ENCODE measurements at regions of chr19 and their contacts with region 1.

Region 1: GRCh38 chr19:4815426-4816201 is 15.9 kb downstream of the TICAM1 start:
- DNase-seq: peak; percentile 85
- ATAC-seq: peak; percentile 77
- H3K4me3 ChIP-seq: peak overlapping the region in 4 of 5 experiments; percentile 19 to 57 (median 37)
- H3K4me3 Mint-ChIP-seq: peak overlapping the region; percentile 74
- H3K27ac ChIP-seq: peak overlapping the region; percentile 3 to 12
- H3K27ac Mint-ChIP-seq: peak overlapping the region; percentile 60
- H3K4me1 ChIP-seq: peaks cover 10 to 20% of the 10 kb centered on the region in 2 donors
- H3K4me1 Mint-ChIP-seq: peaks cover 25% of the 10 kb centered on the region
- H3K27me3 ChIP-seq: no peaks in the 10 kb centered on the region
- H3K27me3 Mint-ChIP-seq: no peaks in the 10 kb centered on the region
- CTCF ChIP-seq: no peak

Region 2: DNA sequence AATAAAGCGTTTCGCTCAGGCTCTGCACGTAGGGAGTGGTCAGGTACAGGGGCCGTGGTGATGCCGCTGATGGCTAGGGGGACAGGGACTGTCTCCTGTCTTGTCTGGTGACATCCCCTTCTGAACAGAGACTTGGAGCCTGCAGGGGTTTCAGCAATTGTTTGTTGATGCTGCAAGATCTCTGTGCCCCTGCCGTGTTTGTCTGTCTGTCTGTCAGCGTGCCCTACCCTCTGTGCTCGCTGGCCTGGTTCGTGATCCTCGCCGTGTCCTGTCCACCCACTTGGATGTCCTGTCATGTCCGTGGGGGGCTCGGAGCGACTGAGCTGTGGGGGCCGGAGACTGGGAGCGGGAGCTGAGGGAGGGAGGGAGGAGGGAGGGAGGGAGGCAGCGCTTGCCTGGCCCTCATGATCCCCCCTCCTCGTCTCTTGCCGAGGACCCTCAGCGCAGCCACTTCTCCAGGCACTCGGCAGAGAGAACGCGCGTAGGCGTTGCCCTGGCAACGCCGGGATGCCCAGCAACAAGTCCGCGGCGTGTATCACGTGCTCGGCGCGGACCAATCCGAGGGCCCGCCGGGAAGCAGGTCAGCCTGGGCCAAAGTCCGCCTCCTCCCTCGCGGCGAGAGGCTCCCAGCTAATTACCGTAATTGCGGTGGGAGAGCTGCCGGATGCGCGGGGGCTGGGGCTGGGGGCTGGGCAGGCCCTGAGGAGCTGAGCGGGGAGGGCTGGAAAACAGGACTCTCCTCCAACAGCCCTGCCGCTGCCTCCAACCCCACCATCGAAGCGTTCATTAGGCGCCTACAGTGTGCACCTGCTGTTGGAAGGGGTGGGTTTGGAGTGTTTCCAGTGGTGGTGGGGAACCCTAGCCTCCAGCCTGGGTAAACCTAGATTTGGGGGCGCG is 56.0 kb before region 1 on chr19:
- CTCF ChIA-PET with region 1: no interaction called
- POLR2A ChIA-PET with region 1: no interaction called
- intact Hi-C with region 1: no loop called
- DNase-seq: peak; percentile 81
- ATAC-seq: peak; percentile 93
- H3K4me3 ChIP-seq: peak overlapping the region in 4 of 5 experiments; percentile 10 to 63 (median 40)
- H3K4me3 Mint-ChIP-seq: peak overlapping the region; percentile 70
- H3K27ac ChIP-seq: no peak overlapping the region
- H3K27ac Mint-ChIP-seq: peak overlapping the region; percentile 32
- H3K4me1 ChIP-seq: peaks cover 12% of the 10 kb centered on the region in 2 donors
- H3K4me1 Mint-ChIP-seq: peaks cover 8% of the 10 kb centered on the region
- H3K27me3 ChIP-seq: peaks cover 0 to 60% (median 22%) of the 10 kb centered on the region in 4 experiments
- H3K27me3 Mint-ChIP-seq: peaks cover 41% of the 10 kb centered on the region
- CTCF ChIP-seq: no peak

Region 3: DNA sequence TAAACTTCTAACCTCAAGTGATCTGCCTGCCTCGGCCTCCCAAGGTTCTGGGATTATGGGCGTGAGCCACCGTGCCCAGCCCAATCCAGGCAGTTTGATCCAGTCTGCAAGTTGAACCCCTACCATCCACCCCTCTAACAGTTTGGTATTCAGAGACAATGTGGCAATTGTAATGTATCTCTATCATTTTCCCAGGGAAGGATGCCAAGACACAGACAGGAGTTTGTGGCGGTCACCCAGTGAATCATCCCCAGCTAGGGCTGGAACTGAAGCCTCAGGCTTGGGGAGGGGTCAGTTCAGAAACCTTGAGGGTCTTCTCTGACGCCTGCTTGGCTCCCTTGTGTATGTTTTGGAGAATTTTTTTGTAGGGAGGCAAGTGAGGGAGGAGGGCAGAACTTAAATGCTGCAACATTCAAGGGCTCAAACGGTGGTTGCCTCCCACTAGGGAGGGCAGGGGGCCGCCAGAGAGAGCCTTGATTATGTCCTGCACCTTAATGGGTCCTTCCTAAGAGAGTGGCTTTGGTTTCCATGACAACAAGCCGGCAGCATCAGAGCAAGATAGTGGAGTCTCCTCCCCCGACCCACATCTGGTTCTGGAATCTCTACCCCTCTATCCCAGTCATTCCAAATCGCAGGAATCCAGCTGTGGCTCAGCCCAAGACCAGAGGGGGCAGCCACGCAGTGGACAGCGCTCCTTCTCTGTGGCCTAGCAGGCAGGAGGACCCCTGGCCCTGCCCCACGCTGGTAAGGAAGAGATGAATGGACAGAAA is 39.0 kb before region 1 on chr19:
- CTCF ChIA-PET with region 1: no interaction called
- POLR2A ChIA-PET with region 1: interaction called, 12 read pairs
- intact Hi-C with region 1: no loop called
- DNase-seq: no peak
- ATAC-seq: no peak
- H3K4me3 ChIP-seq: no peak overlapping the region
- H3K4me3 Mint-ChIP-seq: no peak overlapping the region
- H3K27ac ChIP-seq: no peak overlapping the region
- H3K27ac Mint-ChIP-seq: no peak overlapping the region
- H3K4me1 ChIP-seq: peaks cover 0 to 3% of the 10 kb centered on the region in 2 donors
- H3K4me1 Mint-ChIP-seq: peaks cover 2% of the 10 kb centered on the region
- H3K27me3 ChIP-seq: peaks cover 0 to 23% (median 2%) of the 10 kb centered on the region in 4 experiments
- H3K27me3 Mint-ChIP-seq: peaks cover 26% of the 10 kb centered on the region
- CTCF ChIP-seq: no peak

Region 4: GRCh38 chr19:4831304-4831978 is 15.8 kb after region 1 on chr19 and contains the start of gene TICAM1:
- CTCF ChIA-PET with region 1: interaction called, 135 read pairs
- POLR2A ChIA-PET with region 1: interaction called, 6 read pairs
- intact Hi-C with region 1: loop called (anchors 1 kb)
- DNase-seq: peak; percentile 91
- ATAC-seq: peak; percentile 80
- H3K4me3 ChIP-seq: peak within 1 kb of the TSS; percentile 84 to 96 (median 89)
- H3K4me3 Mint-ChIP-seq: peak within 1 kb of the TSS; percentile 93
- H3K27ac ChIP-seq: peak within 1 kb of the TSS; percentile 91 to 92
- H3K27ac Mint-ChIP-seq: peak within 1 kb of the TSS; percentile 93
- H3K4me1 ChIP-seq: peaks cover 17 to 41% of the 10 kb centered on the region in 2 donors
- H3K4me1 Mint-ChIP-seq: peaks cover 30% of the 10 kb centered on the region
- H3K27me3 ChIP-seq: no peaks in the 10 kb centered on the region
- H3K27me3 Mint-ChIP-seq: no peaks in the 10 kb centered on the region
- CTCF ChIP-seq: no peak
- total RNA-seq, gene TICAM1: 18.1 and 19.7 TPM in 2 replicates

Region 5: GRCh38 chr19:4867534-4868285 is 52.1 kb after region 1 on chr19 and contains the start of gene PLIN3:
- CTCF ChIA-PET with region 1: interaction called, 26 read pairs
- POLR2A ChIA-PET with region 1: no interaction called
- intact Hi-C with region 1: loop called (anchors 5 kb)
- DNase-seq: peak; percentile 94
- ATAC-seq: peak; percentile 95
- H3K4me3 ChIP-seq: peak within 1 kb of the TSS; percentile 66 to 87 (median 80)
- H3K4me3 Mint-ChIP-seq: peak within 1 kb of the TSS; percentile 88
- H3K27ac ChIP-seq: peak within 1 kb of the TSS; percentile 56 to 77
- H3K27ac Mint-ChIP-seq: peak within 1 kb of the TSS; percentile 82
- H3K4me1 ChIP-seq: peaks cover 6 to 28% of the 10 kb centered on the region in 2 donors
- H3K4me1 Mint-ChIP-seq: peaks cover 22% of the 10 kb centered on the region
- H3K27me3 ChIP-seq: no peaks in the 10 kb centered on the region
- H3K27me3 Mint-ChIP-seq: peaks cover 2% of the 10 kb centered on the region
- CTCF ChIP-seq: no peak
- total RNA-seq, gene PLIN3: 26.5 and 34.3 TPM in 2 replicates

Region 6: GRCh38 chr19:4896372-4896771 is 80.8 kb after region 1 on chr19:
- CTCF ChIA-PET with region 1: no interaction called
- POLR2A ChIA-PET with region 1: no interaction called
- intact Hi-C with region 1: no loop called
- DNase-seq: no peak
- ATAC-seq: no peak
- H3K4me3 ChIP-seq: no peak overlapping the region
- H3K4me3 Mint-ChIP-seq: no peak overlapping the region
- H3K27ac ChIP-seq: no peak overlapping the region
- H3K27ac Mint-ChIP-seq: no peak overlapping the region
- H3K4me1 ChIP-seq: peaks cover 4 to 6% of the 10 kb centered on the region in 2 donors
- H3K4me1 Mint-ChIP-seq: peaks cover 12% of the 10 kb centered on the region
- H3K27me3 ChIP-seq: no peaks in the 10 kb centered on the region
- H3K27me3 Mint-ChIP-seq: no peaks in the 10 kb centered on the region
- CTCF ChIP-seq: no peak

Region 7: GRCh38 chr19:4909897-4910593 is 94.4 kb after region 1 on chr19:
- CTCF ChIA-PET with region 1: interaction called, 113 read pairs
- POLR2A ChIA-PET with region 1: no interaction called
- intact Hi-C with region 1: no loop called
- DNase-seq: peak; percentile 95
- ATAC-seq: peak; percentile 97
- H3K4me3 ChIP-seq: peak overlapping the region; percentile 40 to 73 (median 62)
- H3K4me3 Mint-ChIP-seq: peak overlapping the region; percentile 93
- H3K27ac ChIP-seq: no peak overlapping the region
- H3K27ac Mint-ChIP-seq: peak overlapping the region; percentile 59
- H3K4me1 ChIP-seq: peaks cover 48 to 57% of the 10 kb centered on the region in 2 donors
- H3K4me1 Mint-ChIP-seq: peaks cover 55% of the 10 kb centered on the region
- H3K27me3 ChIP-seq: peaks cover 0 to 3% (median 0%) of the 10 kb centered on the region in 4 experiments
- H3K27me3 Mint-ChIP-seq: no peaks in the 10 kb centered on the region
- CTCF ChIP-seq: no peak

Region 8: GRCh38 chr19:5001615-5002014 is 186.0 kb after region 1 on chr19:
- CTCF ChIA-PET with region 1: interaction called, 10 read pairs
- POLR2A ChIA-PET with region 1: no interaction called
- intact Hi-C with region 1: no loop called
- DNase-seq: peak; percentile 56
- ATAC-seq: peak; percentile 61
- H3K4me3 ChIP-seq: no peak overlapping the region
- H3K4me3 Mint-ChIP-seq: no peak overlapping the region
- H3K27ac ChIP-seq: no peak overlapping the region
- H3K27ac Mint-ChIP-seq: no peak overlapping the region
- H3K4me1 ChIP-seq: no peaks in the 10 kb centered on the region
- H3K4me1 Mint-ChIP-seq: peaks cover 13% of the 10 kb centered on the region
- H3K27me3 ChIP-seq: no peaks in the 10 kb centered on the region
- H3K27me3 Mint-ChIP-seq: no peaks in the 10 kb centered on the region
- CTCF ChIP-seq: peak; percentile 70

Region 9: DNA sequence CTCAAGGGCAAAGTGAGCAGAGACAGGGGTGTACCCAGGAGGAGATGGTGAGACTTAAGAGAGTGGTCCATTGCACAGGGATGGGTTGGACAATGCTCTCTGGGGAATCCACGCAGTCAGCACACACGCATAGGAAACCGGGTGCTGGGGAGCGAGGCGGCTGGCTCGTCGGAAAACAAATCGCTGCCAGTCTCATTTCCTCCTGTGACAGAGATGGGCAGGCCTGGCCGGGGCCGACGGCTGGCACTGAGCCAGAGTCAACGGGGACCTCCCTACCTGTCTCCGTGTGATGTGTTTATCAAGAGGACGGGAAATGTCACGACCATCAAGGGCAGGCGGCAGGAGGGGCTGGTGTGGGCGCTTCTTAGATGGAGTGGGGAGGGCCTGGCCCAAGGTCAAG is 497.7 kb after region 1 on chr19:
- CTCF ChIA-PET with region 1: no interaction called
- POLR2A ChIA-PET with region 1: no interaction called
- intact Hi-C with region 1: no loop called
- DNase-seq: peak; percentile 82
- ATAC-seq: peak; percentile 81
- H3K4me3 ChIP-seq: no peak overlapping the region
- H3K4me3 Mint-ChIP-seq: peak overlapping the region; percentile 37
- H3K27ac ChIP-seq: no peak overlapping the region
- H3K27ac Mint-ChIP-seq: peak overlapping the region; percentile 63
- H3K4me1 ChIP-seq: peaks cover 3 to 9% of the 10 kb centered on the region in 2 donors
- H3K4me1 Mint-ChIP-seq: peaks cover 12% of the 10 kb centered on the region
- H3K27me3 ChIP-seq: no peaks in the 10 kb centered on the region
- H3K27me3 Mint-ChIP-seq: peaks cover 8% of the 10 kb centered on the region
- CTCF ChIP-seq: no peak

Measured in B cell (primary cell).